ENCODE measurements at regions of chr11 and their contacts with region 1.

Region 1: GRCh38 chr11:85947431-85948272 is 92.5 kb downstream of the CCDC83 start:
- DNase-seq: peak; percentile 38 to 86
- H3K4me3 ChIP-seq: no peak overlapping the region
- H3K27ac ChIP-seq: peak overlapping the region; percentile 35; the same call in 1 of the 2 replicates
- H3K4me1 ChIP-seq: peaks cover 26% of the 10 kb centered on the region
- H3K27me3 ChIP-seq: no peaks in the 10 kb centered on the region
- CTCF ChIP-seq: no peak

Region 2: GRCh38 chr11:86021377-86021776 is 73.7 kb after region 1 on chr11:
- CTCF ChIA-PET with region 1: no interaction called
- POLR2A ChIA-PET with region 1: no interaction called
- intact Hi-C with region 1: no loop called
- DNase-seq: no peak
- H3K4me3 ChIP-seq: no peak overlapping the region
- H3K27ac ChIP-seq: no peak overlapping the region
- H3K4me1 ChIP-seq: no peaks in the 10 kb centered on the region
- H3K27me3 ChIP-seq: no peaks in the 10 kb centered on the region
- CTCF ChIP-seq: no peak

Region 3: DNA sequence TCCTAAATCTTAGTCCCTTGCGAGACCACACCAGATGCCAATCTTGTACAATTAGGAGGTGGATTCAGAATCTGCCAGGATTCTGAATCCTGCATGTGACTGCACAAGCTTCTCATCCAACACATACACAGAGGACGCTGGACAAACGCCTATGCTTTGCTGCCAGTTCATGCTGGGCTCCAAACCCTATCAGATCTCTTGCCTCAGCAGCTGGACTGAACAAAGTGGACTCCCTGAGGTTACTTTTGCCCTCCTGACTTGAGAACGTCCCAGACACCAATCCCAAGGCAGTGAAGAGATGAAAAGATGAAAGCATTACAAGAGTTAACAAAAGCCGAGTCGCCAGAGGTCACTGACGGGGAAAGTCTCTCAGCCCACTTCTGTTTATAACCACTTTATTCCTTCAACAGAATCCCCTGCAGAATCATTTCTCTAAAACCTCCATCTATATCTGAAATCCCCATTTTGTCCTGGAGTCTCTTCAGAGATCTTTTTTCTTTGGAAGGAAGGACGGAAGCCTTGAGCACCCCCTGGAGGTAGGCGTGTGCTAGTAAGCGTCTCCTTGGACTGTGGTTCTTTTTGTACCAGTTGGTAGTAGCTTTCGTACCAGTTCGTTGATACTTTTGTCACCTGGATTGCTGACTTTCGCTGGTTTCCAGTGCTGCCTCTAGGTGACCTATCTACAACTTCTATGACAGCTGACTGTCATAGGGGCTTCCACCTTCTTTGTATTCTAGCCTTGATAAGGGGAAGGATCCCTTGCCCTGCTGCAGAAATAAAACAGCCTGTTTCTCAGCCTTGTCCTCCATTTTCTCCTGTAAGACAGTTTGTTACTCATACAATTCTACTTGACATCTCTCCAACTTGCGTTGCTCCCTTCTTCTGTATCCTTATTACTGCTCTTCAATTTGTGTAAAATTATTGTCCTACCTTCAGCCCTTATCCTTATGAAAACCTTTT is 270.8 kb after region 1 on chr11:
- CTCF ChIA-PET with region 1: no interaction called
- POLR2A ChIA-PET with region 1: no interaction called
- intact Hi-C with region 1: loop called (anchors 5 kb)
- DNase-seq: peak; percentile 46 to 56
- H3K4me3 ChIP-seq: no peak overlapping the region
- H3K27ac ChIP-seq: no peak overlapping the region
- H3K4me1 ChIP-seq: 0 out of 2 replicates have a peak, but pooled peaks cover 6% of the 10 kb centered on the region
- H3K27me3 ChIP-seq: no peaks in the 10 kb centered on the region
- CTCF ChIP-seq: peak; percentile 90

Measured in PC-9 (cell line).